Heart left ventricle (tissue), 16 donors: ENCODE measurements at regions of chr3 and their contacts with region 1.

Region 1: DNA sequence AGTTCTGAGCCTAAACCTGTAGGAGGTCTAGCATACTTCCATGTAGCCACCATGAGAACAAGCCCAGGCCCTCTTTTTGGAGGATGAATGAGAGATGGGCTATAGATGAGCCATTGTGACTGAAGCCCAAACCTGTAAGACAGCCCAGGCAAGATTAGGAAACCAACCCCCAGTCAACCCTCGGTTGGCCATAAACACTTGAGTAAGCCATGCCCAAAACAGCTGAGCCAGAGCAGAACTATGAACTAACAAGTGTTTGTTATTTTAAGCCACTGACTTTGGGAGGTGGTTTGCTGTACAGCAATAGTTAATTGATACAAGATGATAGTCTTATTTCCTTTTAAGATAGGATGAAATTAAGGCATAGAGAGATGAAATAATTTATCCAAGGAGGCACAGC is 12.4 kb upstream of the CPNE4 start:
- DNase-seq: no peak
- ATAC-seq: no peak
- H3K4me3 ChIP-seq: no peak overlapping the region
- H3K27ac ChIP-seq: no peak overlapping the region
- H3K4me1 ChIP-seq: no peaks in the 10 kb centered on the region
- H3K27me3 ChIP-seq: no peaks in the 10 kb centered on the region
- CTCF ChIP-seq: no peak
- POLR2A ChIP-seq: no peak

Region 2: GRCh38 chr3:131962982-131963381 is 84.2 kb before region 1 on chr3:
- intact Hi-C with region 1: no loop called
- DNase-seq: no peak
- ATAC-seq: no peak
- H3K4me3 ChIP-seq: no peak overlapping the region
- H3K27ac ChIP-seq: no peak overlapping the region
- H3K4me1 ChIP-seq: no peaks in the 10 kb centered on the region
- H3K27me3 ChIP-seq: peaks cover 0 to 5% (median 0%) of the 10 kb centered on the region in 9 donors
- CTCF ChIP-seq: no peak
- POLR2A ChIP-seq: no peak

Region 3: GRCh38 chr3:132180337-132180791 is 133.2 kb after region 1 on chr3:
- intact Hi-C with region 1: loop called in 1 of 10 experiments (anchors 5 kb)
- DNase-seq: no peak
- ATAC-seq: no peak
- H3K4me3 ChIP-seq: no peak overlapping the region
- H3K27ac ChIP-seq: no peak overlapping the region
- H3K4me1 ChIP-seq: no peaks in the 10 kb centered on the region
- H3K27me3 ChIP-seq: peaks cover 0 to 3% (median 0%) of the 10 kb centered on the region in 9 donors
- CTCF ChIP-seq: peak in 11 of 12 donors; percentile 27 to 53 (median 40)
- POLR2A ChIP-seq: no peak

Region 4: DNA sequence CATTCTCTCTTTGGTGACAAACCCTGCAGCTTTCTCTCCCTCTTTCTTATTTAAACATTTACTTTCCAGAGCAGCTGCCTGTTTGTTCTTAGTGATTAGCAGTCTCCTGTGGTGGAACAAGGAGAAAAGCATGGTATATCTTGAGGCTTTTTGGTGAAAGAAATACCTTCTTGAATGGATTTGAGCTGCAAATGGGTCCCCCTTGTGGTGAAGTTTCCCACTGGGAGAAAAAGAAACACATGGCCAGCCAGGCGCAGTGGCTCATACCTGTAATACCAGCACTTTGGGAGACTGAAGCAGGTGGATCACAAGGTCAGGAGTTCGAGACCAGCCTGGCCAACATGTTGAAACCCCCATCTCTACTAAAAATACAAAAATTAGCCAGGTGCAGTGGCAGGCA is 221.7 kb after region 1 on chr3:
- intact Hi-C with region 1: no loop called
- DNase-seq: no peak
- ATAC-seq: no peak
- H3K4me3 ChIP-seq: no peak overlapping the region
- H3K27ac ChIP-seq: no peak overlapping the region
- H3K4me1 ChIP-seq: no peaks in the 10 kb centered on the region
- H3K27me3 ChIP-seq: no peaks in the 10 kb centered on the region
- CTCF ChIP-seq: peak in 6 of 12 donors; percentile 13 to 31 (median 26)
- POLR2A ChIP-seq: no peak